ENCODE measurements at regions of chr19 and their contacts with region 1.

Region 1: DNA sequence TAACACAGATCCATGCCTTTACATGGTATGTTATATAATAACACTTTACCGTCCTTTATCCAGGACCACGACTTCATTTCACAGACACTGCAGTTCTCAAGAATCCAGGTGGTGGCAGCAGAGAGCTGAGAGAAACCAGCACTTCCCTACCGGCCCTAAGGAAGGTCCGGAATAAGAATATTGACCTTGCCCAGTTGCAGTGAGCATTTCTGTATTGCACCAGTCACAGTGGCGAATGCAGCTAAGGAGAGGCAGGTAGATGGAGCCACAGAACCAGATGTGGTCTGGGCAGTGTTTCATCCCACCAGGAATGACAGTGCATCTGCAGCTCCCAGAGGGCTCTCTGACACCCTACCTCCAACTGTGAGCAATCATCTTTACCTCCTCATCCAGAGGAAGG is 44.6 kb downstream of the ZNF787 start:
- DNase-seq: no peak
- ATAC-seq: peak; percentile 78

Region 2: DNA sequence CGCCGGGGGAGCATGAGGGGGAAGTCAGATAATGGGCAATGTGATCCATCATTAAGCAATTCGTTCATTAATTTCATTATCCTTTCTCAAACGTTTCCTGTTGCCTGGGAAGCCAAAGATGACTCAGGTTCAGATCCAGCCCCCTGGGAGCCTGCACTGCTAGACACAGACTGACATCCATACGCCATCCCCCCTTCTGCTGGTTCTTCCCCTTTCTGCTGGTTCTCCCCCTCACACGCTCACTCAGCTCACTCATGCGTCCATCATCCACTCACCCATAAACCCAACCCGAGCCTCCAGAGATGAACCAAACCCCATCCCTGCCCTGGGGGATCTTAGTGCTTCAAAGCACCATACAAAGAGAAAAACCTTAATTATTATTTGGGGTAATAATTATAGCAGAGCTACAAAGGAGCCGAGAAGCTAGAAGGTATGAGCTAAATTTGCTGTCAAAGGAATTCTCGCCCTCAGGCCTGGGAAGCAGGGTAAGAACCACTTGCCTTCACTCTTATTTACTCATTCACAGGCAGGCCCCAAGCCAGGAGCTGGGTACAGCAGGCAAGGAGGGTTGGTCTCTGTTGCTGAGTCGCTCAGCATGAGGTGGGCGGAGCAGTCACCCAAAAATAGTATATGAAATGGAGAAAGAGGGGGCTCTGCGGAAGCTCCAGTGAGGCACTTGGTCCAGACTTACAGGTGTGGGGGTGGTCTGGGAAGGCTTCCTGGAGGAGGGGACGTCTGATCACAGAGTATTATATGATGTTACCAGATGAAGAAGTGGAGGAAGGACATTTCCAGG is 57.6 kb after region 1 on chr19:
- intact Hi-C with region 1: no loop called
- DNase-seq: no peak
- ATAC-seq: no peak

Region 3: GRCh38 chr19:56170261-56170660 is 93.8 kb after region 1 on chr19:
- intact Hi-C with region 1: loop called (anchors 5 kb)
- DNase-seq: no peak
- ATAC-seq: no peak

Region 4: DNA sequence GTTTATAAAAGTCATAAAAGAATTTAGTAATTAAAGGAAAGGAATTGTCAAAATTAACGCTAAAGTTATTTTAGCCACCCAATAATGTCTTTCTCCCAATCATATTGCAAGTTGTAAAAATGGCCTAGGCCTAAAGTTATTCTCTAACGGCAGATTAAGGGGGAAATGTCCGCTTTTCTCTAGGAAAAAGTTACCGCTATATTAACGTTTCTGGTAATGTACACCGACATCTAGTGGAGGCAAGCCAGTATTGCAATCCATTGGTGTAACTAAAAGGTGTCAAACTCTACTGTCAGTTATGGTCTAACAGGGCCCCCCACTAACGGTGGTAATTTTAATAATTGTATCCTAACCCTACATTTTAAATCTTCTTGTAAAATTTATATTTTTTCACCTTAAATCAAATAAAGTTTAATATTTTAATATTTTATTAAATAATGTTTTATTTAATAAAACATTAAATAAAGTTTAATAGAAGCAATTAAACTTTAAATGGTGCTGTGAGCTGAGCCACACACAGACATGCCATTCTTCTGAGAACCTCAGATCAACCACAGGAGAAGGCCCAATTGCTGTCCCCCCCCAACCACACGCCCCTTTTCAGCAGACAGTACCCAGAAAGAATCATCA is 274.0 kb after region 1 on chr19:
- intact Hi-C with region 1: loop called (anchors 5 kb)
- DNase-seq: no peak
- ATAC-seq: peak; percentile 58